ENCODE measurements at regions of chr3 and their contacts with region 1.

Region 1: DNA sequence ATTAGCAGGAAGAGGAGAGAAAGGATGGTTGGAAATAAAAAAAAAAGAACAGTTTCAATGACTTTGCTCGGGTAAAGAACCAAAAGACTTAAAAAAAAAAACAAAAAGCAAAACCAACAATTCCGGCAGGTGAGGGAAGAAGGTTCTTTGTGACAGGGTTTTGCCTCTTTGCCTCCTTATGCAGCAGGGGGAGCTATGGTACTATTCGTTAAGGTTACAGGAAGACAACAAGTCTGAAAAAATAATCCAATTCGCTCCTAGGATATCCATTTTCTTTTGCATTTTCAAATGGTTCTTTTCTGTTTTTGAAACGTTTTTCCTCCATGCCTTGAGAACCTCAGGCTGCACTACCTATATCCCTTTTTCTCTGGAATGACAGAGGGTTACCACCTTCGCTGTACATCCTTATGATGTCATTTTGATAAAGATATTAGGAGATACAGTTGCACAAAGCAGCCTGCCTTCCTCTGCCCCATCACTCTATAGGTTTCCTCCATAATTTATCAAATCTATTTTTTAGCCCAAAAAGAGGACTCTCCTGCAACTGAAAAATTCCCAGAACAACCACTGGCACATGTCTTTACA is 55.0 kb downstream of the CFAP20DC start:
- DNase-seq: peak; percentile 69
- H3K4me3 Mint-ChIP-seq: no peak overlapping the region
- H3K27ac Mint-ChIP-seq: peak overlapping the region; percentile 75
- H3K4me1 Mint-ChIP-seq: peaks cover 33% of the 10 kb centered on the region
- H3K27me3 Mint-ChIP-seq: no peaks in the 10 kb centered on the region
- CTCF ChIP-seq: peak; percentile 42

Region 2: GRCh38 chr3:58640700-58641372 is 354.0 kb before region 1 on chr3:
- CTCF ChIA-PET with region 1: no interaction called
- intact Hi-C with region 1: loop called (anchors 10 kb)
- DNase-seq: peak; percentile 84
- H3K4me3 Mint-ChIP-seq: no peak overlapping the region
- H3K27ac Mint-ChIP-seq: no peak overlapping the region
- H3K4me1 Mint-ChIP-seq: peaks cover 7% of the 10 kb centered on the region
- H3K27me3 Mint-ChIP-seq: peaks cover 7% of the 10 kb centered on the region
- CTCF ChIP-seq: peak; percentile 76

Region 3: GRCh38 chr3:59017617-59017984 is 22.8 kb after region 1 on chr3:
- CTCF ChIA-PET with region 1: interaction called, 21 read pairs
- intact Hi-C with region 1: no loop called
- DNase-seq: peak; percentile 54
- H3K4me3 Mint-ChIP-seq: peak overlapping the region; percentile 45
- H3K27ac Mint-ChIP-seq: peak overlapping the region; percentile 50
- H3K4me1 Mint-ChIP-seq: peaks cover 34% of the 10 kb centered on the region
- H3K27me3 Mint-ChIP-seq: no peaks in the 10 kb centered on the region
- CTCF ChIP-seq: no peak

Region 4: DNA sequence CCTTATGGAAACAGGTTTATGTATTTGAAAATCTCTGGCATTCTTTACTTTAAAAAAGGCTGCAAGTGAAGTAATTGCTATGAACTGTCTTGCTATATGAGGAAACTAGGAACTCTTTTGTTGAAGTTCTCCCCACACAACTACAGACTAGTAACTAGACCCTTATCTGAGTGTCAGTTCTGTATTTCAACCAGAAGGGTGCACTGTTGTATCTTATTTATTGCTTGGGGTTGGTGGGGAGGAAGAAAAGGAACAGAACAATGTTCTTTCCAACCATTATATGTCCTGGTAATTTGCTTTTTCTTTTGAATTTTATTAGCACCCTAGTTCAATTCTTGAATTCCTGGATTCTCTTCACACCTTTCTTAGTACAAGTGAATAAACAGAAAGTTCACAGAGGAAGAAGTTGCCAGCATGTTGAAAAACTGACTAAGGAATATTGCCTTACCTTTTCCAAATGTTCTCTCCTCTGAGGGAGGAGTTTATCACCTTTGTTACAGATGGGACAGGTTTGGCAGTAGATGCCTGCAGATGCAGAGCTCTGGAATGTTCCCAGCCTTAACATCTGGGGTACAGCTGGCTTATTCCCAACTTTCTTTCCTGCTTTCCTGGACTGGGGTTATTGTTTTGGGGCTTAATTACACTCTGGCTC is 217.4 kb after region 1 on chr3:
- CTCF ChIA-PET with region 1: no interaction called
- intact Hi-C with region 1: loop called (anchors 10 kb)
- DNase-seq: peak; percentile 28
- H3K4me3 Mint-ChIP-seq: no peak overlapping the region
- H3K27ac Mint-ChIP-seq: no peak overlapping the region
- H3K4me1 Mint-ChIP-seq: no peaks in the 10 kb centered on the region
- H3K27me3 Mint-ChIP-seq: no peaks in the 10 kb centered on the region
- CTCF ChIP-seq: peak; percentile 35

Region 5: GRCh38 chr3:59334585-59334984 is 339.7 kb after region 1 on chr3:
- CTCF ChIA-PET with region 1: no interaction called
- intact Hi-C with region 1: no loop called
- DNase-seq: no peak
- H3K4me3 Mint-ChIP-seq: no peak overlapping the region
- H3K27ac Mint-ChIP-seq: no peak overlapping the region
- H3K4me1 Mint-ChIP-seq: no peaks in the 10 kb centered on the region
- H3K27me3 Mint-ChIP-seq: peaks cover 4% of the 10 kb centered on the region
- CTCF ChIP-seq: no peak

Region 6: GRCh38 chr3:59857589-59858346 is 862.9 kb after region 1 on chr3:
- CTCF ChIA-PET with region 1: no interaction called
- intact Hi-C with region 1: loop called (anchors 10 kb)
- DNase-seq: peak; percentile 73
- H3K4me3 Mint-ChIP-seq: peak overlapping the region; percentile 27
- H3K27ac Mint-ChIP-seq: peak overlapping the region; percentile 54
- H3K4me1 Mint-ChIP-seq: no peaks in the 10 kb centered on the region
- H3K27me3 Mint-ChIP-seq: no peaks in the 10 kb centered on the region
- CTCF ChIP-seq: peak; percentile 77

Measured in Calu3 (cell line).